PC-9 (cell line): ENCODE measurements at regions of chr9 and their contacts with region 1.

Region 1: GRCh38 chr9:33623658-33624586 is 99.9 kb downstream of the ANKRD18B start:
- DNase-seq: peak; percentile 52 to 64
- H3K4me3 ChIP-seq: no peak overlapping the region
- H3K27ac ChIP-seq: no peak overlapping the region
- H3K4me1 ChIP-seq: peaks cover 10% of the 10 kb centered on the region
- H3K27me3 ChIP-seq: no peaks in the 10 kb centered on the region
- CTCF ChIP-seq: peak; percentile 80

Region 2: DNA sequence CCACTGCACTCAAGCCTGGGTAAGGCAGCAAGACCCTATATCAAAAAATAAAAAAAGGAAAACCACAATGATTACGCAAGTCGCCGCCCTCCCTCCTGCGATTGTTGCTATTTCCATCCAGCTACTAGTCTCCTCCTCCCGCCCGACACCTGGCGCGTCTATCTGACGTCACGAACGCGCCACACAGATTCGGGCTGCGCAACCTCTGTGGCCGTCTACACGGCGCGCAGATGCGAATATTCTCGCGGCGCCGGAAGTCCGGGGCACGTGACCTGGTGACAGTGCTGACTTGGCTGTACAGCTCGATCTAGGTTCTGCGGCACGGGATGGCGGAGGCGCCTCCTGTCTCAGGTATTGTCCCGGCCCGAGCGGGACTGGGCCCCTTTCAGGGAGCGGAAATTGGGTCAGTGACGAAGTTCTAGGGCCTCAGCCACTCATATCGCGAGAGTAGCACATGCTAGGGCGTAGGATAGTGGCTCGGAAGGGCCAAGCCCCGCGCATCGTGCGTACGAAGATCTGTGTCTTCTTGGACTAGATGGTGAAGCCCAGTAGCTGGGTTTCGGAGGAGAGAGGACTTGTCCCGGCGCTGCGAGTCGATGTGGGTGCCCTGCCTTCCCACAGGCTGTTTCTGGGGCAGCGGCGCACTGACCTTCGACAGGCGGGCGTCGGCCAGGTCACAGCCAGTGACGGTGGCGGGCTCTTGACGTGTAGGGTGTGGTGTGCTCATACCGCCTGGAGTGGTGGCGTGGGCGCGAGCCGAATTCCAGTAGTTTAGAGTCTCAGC is 333.5 kb before region 1 on chr9 and contains the start of gene NFX1:
- CTCF ChIA-PET with region 1: no interaction called
- POLR2A ChIA-PET with region 1: no interaction called
- intact Hi-C with region 1: loop called (anchors 2 kb)
- DNase-seq: peak; percentile 84 to 90
- H3K4me3 ChIP-seq: peak within 1 kb of the TSS; percentile 75
- H3K27ac ChIP-seq: peak within 1 kb of the TSS; percentile 95
- H3K4me1 ChIP-seq: no peaks in the 10 kb centered on the region; the same call in 1 of the 2 replicates
- H3K27me3 ChIP-seq: no peaks in the 10 kb centered on the region
- CTCF ChIP-seq: no peak
- total RNA-seq, gene NFX1: 14.9 and 15.0 TPM in 2 replicates

Region 3: DNA sequence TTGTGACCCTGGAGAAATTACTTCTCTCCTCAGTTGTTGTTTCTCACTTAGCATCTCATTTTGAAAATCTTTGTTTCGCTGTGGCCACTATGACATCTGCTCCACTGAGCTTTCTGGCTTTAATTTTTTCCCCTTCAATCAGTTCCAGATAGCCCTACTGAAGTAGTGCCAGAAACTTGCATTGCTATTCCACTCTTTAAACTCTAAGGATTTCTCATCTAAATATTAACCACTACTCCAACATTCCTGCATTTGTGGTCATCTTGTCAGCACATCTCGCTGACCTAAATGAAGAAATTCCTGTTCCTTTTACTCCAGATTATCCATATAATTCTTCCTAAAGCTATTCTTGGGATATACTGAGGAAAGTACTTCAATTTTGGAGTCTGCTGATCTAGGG is 134.9 kb before region 1 on chr9:
- CTCF ChIA-PET with region 1: no interaction called
- POLR2A ChIA-PET with region 1: interaction called, 10 read pairs
- intact Hi-C with region 1: no loop called
- DNase-seq: no peak
- H3K4me3 ChIP-seq: no peak overlapping the region
- H3K27ac ChIP-seq: no peak overlapping the region
- H3K4me1 ChIP-seq: no peaks in the 10 kb centered on the region
- H3K27me3 ChIP-seq: no peaks in the 10 kb centered on the region
- CTCF ChIP-seq: no peak

Region 4: DNA sequence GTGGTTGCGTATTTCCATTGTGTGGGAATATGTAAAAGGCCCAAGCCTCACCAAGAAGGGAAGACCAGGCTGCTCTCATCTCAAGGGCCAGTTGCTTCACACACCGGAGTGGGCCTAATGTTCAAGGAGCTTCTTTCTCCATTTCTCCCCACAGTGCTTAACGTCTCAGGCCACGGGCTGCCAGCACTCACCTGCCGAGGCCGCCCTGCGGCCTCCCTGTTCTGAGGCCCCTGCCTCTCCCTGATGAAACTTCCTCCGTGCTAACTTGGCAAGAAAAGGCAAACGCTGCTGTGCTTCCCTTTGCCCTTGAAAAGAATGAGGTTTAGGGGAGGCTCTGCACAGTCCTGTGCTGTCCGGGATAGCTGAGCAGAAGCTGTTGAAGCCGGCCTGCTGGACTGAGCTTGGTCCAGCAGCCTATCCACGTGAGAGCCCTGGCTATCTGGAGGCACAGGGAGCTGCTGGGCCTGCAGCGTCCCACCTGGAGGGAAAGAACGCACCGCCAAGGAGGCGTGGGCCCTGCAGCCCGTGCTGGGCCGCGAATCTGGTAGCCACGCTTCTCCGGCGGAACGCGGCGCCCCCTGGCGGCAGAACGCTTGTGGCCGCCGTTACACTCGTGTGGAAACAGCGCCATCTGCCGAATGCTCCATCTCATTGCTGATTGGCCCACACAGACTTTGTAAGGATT is 97.9 kb after region 1 on chr9:
- CTCF ChIA-PET with region 1: interaction called, 8 read pairs
- POLR2A ChIA-PET with region 1: no interaction called
- intact Hi-C with region 1: loop called (anchors 1 kb)
- DNase-seq: peak; percentile 55 to 81
- H3K4me3 ChIP-seq: no peak overlapping the region
- H3K27ac ChIP-seq: no peak overlapping the region
- H3K4me1 ChIP-seq: no peaks in the 10 kb centered on the region; the same call in 1 of the 2 replicates
- H3K27me3 ChIP-seq: no peaks in the 10 kb centered on the region
- CTCF ChIP-seq: peak; percentile 93

Region 5: GRCh38 chr9:33731142-33731541 is 107.2 kb after region 1 on chr9:
- CTCF ChIA-PET with region 1: interaction called, 12 read pairs
- POLR2A ChIA-PET with region 1: no interaction called
- intact Hi-C with region 1: no loop called
- DNase-seq: no peak
- H3K4me3 ChIP-seq: no peak overlapping the region
- H3K27ac ChIP-seq: no peak overlapping the region
- H3K4me1 ChIP-seq: peaks cover 23% of the 10 kb centered on the region
- H3K27me3 ChIP-seq: no peaks in the 10 kb centered on the region
- CTCF ChIP-seq: no peak

Region 6: GRCh38 chr9:33908749-33909148 is 284.8 kb after region 1 on chr9:
- CTCF ChIA-PET with region 1: interaction called, 10 read pairs
- POLR2A ChIA-PET with region 1: no interaction called
- intact Hi-C with region 1: no loop called
- DNase-seq: no peak
- H3K4me3 ChIP-seq: no peak overlapping the region
- H3K27ac ChIP-seq: no peak overlapping the region
- H3K4me1 ChIP-seq: no peaks in the 10 kb centered on the region
- H3K27me3 ChIP-seq: no peaks in the 10 kb centered on the region
- CTCF ChIP-seq: no peak

Region 7: DNA sequence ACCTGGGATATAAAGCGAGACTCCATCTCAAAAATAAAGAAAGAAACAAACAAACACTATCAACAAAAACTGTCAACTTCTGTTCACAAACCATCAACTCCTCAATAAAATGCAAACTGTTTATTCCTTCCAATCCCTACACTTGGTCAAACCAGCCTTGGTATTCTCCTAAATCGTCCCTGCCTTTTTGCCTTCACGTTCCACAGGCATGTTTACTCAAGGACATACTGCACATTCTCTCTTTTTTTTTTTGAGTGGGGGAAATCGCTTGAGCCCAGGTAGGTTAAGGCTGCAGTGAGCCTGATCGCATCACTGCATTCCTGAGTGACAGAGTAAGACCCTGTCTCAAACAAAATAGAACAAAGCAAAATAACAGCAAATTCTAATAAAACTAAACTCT is 411.7 kb after region 1 on chr9:
- CTCF ChIA-PET with region 1: no interaction called
- POLR2A ChIA-PET with region 1: no interaction called
- intact Hi-C with region 1: no loop called
- DNase-seq: no peak
- H3K4me3 ChIP-seq: no peak overlapping the region
- H3K27ac ChIP-seq: no peak overlapping the region
- H3K4me1 ChIP-seq: no peaks in the 10 kb centered on the region
- H3K27me3 ChIP-seq: no peaks in the 10 kb centered on the region
- CTCF ChIP-seq: no peak